CD8-positive, alpha-beta T cell (primary cell): ENCODE measurements at regions of chr2 and their contacts with region 1.

Region 1: GRCh38 chr2:216057688-216058193 is 23.9 kb downstream of the PECR start:
- DNase-seq: peak; percentile 22 to 87 (median 67)
- ATAC-seq: peak; percentile 99
- H3K4me3 ChIP-seq: peak overlapping the region; percentile 36 to 46
- H3K4me3 Mint-ChIP-seq: peak overlapping the region; percentile 81
- H3K27ac ChIP-seq: peak overlapping the region; percentile 80 to 91
- H3K27ac Mint-ChIP-seq: peak overlapping the region; percentile 99
- H3K4me1 ChIP-seq: peaks cover 20% of the 10 kb centered on the region
- H3K4me1 Mint-ChIP-seq: peaks cover 32% of the 10 kb centered on the region
- H3K27me3 ChIP-seq: no peaks in the 10 kb centered on the region
- H3K27me3 Mint-ChIP-seq: no peaks in the 10 kb centered on the region
- CTCF ChIP-seq: no peak

Region 2: DNA sequence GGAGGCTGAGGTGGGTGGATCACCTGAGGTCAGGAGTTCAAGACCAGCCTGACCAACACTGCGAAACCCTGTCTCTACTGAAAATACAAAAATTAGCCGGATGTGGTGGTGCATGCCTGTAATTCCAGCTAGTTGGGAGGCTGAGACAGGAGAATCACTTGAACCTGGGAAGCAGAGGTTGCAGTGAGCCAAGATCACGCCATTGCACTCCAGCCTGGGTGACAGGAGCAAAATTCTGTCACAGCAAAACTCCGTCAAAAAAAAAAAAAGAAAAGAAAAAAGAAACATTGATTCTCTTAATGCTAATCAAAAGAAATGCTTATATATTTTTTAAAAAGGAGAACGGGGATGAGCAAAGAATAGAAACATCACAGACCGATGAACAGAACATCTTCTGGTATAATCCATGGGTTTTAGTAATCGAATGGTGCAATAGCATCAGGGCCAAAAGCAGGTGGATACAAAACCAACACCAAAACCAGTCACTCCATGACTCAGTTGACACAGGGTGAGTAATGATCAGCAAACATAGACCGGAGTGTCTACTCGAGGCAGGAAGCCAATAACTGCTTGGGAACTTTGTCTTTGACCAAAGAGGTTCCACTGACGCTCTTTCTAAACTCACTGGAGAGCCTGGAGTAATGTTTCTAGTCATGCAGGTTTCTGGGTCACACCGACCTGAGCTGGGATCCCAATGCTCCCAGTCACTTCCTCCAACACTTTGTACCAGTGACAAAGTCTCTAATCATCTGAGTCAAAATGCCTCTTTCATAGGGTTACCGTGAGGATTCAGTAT is 75.5 kb before region 1 on chr2:
- CTCF ChIA-PET with region 1: no interaction called
- POLR2A ChIA-PET with region 1: no interaction called
- intact Hi-C with region 1: no loop called
- DNase-seq: no peak
- ATAC-seq: no peak
- H3K4me3 ChIP-seq: no peak overlapping the region
- H3K4me3 Mint-ChIP-seq: no peak overlapping the region
- H3K27ac ChIP-seq: no peak overlapping the region
- H3K27ac Mint-ChIP-seq: no peak overlapping the region
- H3K4me1 ChIP-seq: no peaks in the 10 kb centered on the region
- H3K4me1 Mint-ChIP-seq: peaks cover 16% of the 10 kb centered on the region
- H3K27me3 ChIP-seq: no peaks in the 10 kb centered on the region
- H3K27me3 Mint-ChIP-seq: no peaks in the 10 kb centered on the region
- CTCF ChIP-seq: no peak

Region 3: GRCh38 chr2:216081487-216082116 is 23.9 kb after region 1 on chr2 and contains the starts of genes PECR and TMEM169:
- CTCF ChIA-PET with region 1: interaction called, 4 read pairs
- POLR2A ChIA-PET with region 1: interaction called, 12 read pairs
- intact Hi-C with region 1: loop called in 1 of 2 experiments (anchors 1 kb)
- DNase-seq: peak; percentile 36 to 83 (median 68)
- ATAC-seq: peak; percentile 81
- H3K4me3 ChIP-seq: peak within 1 kb of the TSS; percentile 90 to 91
- H3K4me3 Mint-ChIP-seq: peak within 1 kb of the TSS; percentile 95
- H3K27ac ChIP-seq: peak within 1 kb of the TSS; percentile 55 to 66
- H3K27ac Mint-ChIP-seq: peak within 1 kb of the TSS; percentile 93
- H3K4me1 ChIP-seq: peaks cover 66% of the 10 kb centered on the region
- H3K4me1 Mint-ChIP-seq: peaks cover 65% of the 10 kb centered on the region
- H3K27me3 ChIP-seq: no peaks in the 10 kb centered on the region
- H3K27me3 Mint-ChIP-seq: no peaks in the 10 kb centered on the region
- CTCF ChIP-seq: no peak
- total RNA-seq, gene PECR: 5.9 to 6.4 TPM
- total RNA-seq, gene TMEM169: not detected

Region 4: DNA sequence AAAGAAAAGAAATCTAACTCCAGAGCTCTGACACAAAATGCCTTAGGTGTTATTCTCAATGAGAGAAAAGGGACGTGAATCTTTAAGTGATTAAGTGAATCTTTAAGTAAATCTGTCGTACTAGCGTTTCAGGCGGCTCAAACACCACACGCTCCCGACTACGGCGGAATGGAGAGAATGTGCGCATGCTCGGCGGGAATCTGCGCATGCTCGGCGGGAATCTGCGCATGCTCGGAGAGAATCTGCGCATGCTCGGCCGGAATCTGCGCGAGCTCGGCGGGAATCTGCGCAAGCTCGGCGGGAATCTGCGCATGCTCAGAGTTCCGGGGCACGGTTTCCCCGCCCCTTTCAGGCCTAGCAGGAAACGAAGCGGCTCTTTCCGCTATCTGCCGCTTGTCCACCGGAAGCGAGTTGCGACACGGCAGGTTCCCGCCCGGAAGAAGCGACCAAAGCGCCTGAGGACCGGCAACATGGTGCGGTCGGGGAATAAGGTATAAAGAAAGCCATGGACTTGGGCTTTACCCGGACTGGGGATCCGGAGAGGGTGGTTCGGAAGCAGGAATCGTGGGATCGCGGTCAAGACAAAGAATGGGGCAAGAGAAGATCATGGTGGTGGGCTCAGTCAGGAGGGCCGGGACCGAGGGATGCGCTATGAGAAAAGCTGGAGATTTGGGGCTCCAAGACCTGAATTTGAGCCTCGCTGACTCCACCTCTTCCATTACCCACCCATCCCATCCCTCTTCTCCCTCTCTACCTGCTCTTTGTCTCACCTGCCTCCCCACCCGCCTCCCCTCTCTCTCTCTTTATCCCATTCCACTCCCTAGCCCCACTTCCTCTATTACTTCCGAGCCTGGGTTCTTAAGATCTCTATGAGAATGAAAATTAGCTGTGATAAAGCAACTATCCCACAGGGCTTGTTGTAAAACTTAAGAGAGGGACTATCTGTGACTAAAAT is 51.5 kb after region 1 on chr2 and contains the start of gene XRCC5:
- CTCF ChIA-PET with region 1: interaction called, 16 read pairs
- POLR2A ChIA-PET with region 1: interaction called, 14 read pairs
- intact Hi-C with region 1: loop called in 1 of 2 experiments (anchors 2 kb)
- DNase-seq: peak; percentile 93 to 99 (median 99)
- ATAC-seq: peak; percentile 84
- H3K4me3 ChIP-seq: peak within 1 kb of the TSS; percentile 96
- H3K4me3 Mint-ChIP-seq: peak within 1 kb of the TSS; percentile 100
- H3K27ac ChIP-seq: peak within 1 kb of the TSS; percentile 92 to 96
- H3K27ac Mint-ChIP-seq: peak within 1 kb of the TSS; percentile 100
- H3K4me1 ChIP-seq: peaks cover 46% of the 10 kb centered on the region
- H3K4me1 Mint-ChIP-seq: peaks cover 51% of the 10 kb centered on the region
- H3K27me3 ChIP-seq: no peaks in the 10 kb centered on the region
- H3K27me3 Mint-ChIP-seq: no peaks in the 10 kb centered on the region
- CTCF ChIP-seq: no peak
- total RNA-seq, gene XRCC5: 120 to 125 TPM

Region 5: DNA sequence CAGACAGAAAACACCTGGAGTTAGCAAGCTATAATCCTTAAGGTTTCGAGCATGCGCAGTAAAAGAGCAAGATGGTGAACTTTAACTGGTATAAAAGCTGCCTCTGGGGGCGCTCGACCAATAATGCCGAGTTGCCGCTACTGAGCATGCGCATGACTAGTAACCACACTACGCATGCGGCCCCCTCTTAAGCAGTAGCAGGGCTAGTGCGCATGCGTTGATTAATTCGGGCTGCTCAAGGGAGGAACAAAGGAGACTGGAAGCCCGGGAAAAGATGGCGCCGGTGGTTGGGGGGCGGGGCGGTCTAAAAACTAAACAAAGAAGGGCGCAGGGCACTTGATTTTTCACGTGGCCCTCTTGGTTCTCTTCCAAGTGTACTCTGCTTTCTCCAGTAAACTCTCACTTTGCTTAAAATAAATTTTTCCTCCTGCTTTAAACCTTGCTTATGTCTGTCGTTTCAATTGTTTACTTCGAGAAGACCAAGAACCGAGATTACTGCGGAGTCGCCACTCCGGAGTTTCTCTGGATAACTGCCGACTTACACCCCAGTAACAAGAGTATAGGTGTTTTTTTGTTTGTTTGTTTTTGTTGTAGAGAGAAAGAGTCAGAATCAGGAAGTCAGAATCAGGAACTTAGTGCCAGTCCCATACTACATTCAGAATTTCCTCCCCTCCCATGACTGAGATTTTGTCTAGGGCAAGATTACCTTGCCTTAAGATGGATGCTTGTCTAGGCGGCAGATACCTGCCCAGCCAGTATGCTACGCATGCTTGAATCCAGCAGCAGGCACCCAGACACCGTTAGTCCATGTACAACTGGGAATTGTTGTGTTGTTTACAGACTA is 57.2 kb after region 1 on chr2:
- CTCF ChIA-PET with region 1: interaction called, 16 read pairs
- POLR2A ChIA-PET with region 1: interaction called, 14 read pairs
- intact Hi-C with region 1: loop called in 1 of 2 experiments (anchors 2 kb)
- DNase-seq: peak; percentile 94 to 99 (median 97)
- ATAC-seq: peak; percentile 91
- H3K4me3 ChIP-seq: peak overlapping the region; percentile 58 to 79
- H3K4me3 Mint-ChIP-seq: peak overlapping the region; percentile 85
- H3K27ac ChIP-seq: peak overlapping the region; percentile 60 to 81
- H3K27ac Mint-ChIP-seq: peak overlapping the region; percentile 94
- H3K4me1 ChIP-seq: peaks cover 91% of the 10 kb centered on the region
- H3K4me1 Mint-ChIP-seq: peaks cover 92% of the 10 kb centered on the region
- H3K27me3 ChIP-seq: no peaks in the 10 kb centered on the region
- H3K27me3 Mint-ChIP-seq: no peaks in the 10 kb centered on the region
- CTCF ChIP-seq: peak; percentile 69